ENCODE measurements at regions of chr2 and their contacts with region 1.

Region 1: DNA sequence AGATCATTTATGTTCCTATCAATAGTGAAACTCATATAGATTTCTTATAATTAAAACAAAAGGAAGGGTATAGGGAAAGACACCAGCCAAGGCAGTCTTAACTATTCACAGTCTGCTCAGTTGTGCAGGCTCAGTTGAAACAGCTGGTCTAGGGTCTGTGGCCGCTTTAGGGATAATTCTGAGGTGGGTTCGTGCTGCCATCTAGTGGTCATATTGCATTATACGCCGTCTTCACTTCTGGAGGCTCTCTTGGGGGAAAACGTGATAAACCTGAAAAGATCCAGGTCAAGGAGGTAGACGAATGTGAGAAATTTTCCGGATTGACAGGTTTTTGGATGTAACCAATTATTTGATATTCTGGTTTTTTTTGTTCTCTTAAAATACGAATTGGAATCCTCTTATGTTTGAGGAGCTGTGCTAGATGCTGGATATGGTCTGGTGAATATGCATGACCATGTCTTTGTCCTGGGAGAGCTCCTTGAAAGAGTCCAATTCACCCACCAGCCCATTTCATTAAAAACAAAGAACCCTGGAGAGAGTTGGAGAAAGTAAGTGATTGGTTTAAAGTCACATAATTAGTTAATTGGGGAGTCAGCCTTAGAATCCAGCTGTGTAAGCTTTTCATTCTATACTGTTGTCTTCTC is 492.4 kb downstream of the PLCL1 start:
- DNase-seq: no peak
- ATAC-seq: peak; percentile 79
- H3K4me3 ChIP-seq: no peak overlapping the region
- H3K27ac ChIP-seq: no peak overlapping the region
- H3K4me1 ChIP-seq: no peaks in the 10 kb centered on the region
- H3K27me3 ChIP-seq: no peaks in the 10 kb centered on the region

Region 2: GRCh38 chr2:197705121-197705911 is 591.5 kb before region 1 on chr2 and contains the start of gene MARS2:
- intact Hi-C with region 1: loop called in 1 of 2 experiments (anchors 5 kb)
- DNase-seq: peak; percentile 96 to 98
- ATAC-seq: peak; percentile 98
- H3K4me3 ChIP-seq: peak within 1 kb of the TSS; percentile 72 to 80
- H3K27ac ChIP-seq: peak within 1 kb of the TSS; percentile 21 to 55
- H3K4me1 ChIP-seq: peaks cover 0 to 5% of the 10 kb centered on the region in 2 donors
- H3K27me3 ChIP-seq: no peaks in the 10 kb centered on the region
- total RNA-seq, gene MARS2: 3.6 to 3.7 TPM

Region 3: GRCh38 chr2:198127627-198128026 is 169.2 kb before region 1 on chr2:
- intact Hi-C with region 1: loop called in 1 of 2 experiments (anchors 5 kb)
- DNase-seq: peak in 1 of 2 donors; percentile 70
- ATAC-seq: peak; percentile 84
- H3K4me3 ChIP-seq: no peak overlapping the region
- H3K27ac ChIP-seq: no peak overlapping the region
- H3K4me1 ChIP-seq: peaks cover 0 to 3% of the 10 kb centered on the region in 2 donors
- H3K27me3 ChIP-seq: no peaks in the 10 kb centered on the region

Region 4: DNA sequence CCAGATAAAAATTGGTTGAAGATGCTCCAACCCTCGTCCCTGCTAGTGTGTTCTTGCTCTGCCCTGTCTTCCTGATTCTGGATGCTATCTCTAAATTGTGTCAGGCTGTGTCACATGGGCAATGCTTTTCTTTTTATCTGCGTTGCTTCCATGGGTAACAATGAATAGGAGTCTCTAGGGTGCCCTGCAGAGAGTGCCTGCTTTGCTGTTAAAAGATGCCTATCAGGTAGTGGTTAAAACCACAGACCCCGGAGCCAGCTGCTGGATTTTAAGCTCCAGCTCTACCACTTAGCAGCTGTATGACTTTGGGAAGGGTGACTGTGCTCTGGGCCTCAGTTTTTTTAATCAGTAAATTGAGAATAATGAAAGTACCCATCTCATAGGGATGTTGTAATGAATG is 152.1 kb before region 1 on chr2:
- intact Hi-C with region 1: loop called in 1 of 2 experiments (anchors 10 kb)
- DNase-seq: no peak
- ATAC-seq: no peak
- H3K4me3 ChIP-seq: no peak overlapping the region
- H3K27ac ChIP-seq: no peak overlapping the region
- H3K4me1 ChIP-seq: peaks cover 1 to 5% of the 10 kb centered on the region in 2 donors
- H3K27me3 ChIP-seq: no peaks in the 10 kb centered on the region